Colonic mucosa (tissue), 4 donors: ENCODE measurements at regions of chr6 and their contacts with region 1.

Region 1: GRCh38 chr6:5379647-5380242 is 118.4 kb downstream of the FARS2 start:
- DNase-seq: peak; percentile 34
- H3K4me3 ChIP-seq: no peak overlapping the region
- H3K27ac ChIP-seq: no peak overlapping the region
- H3K4me1 ChIP-seq: no peaks in the 10 kb centered on the region
- H3K27me3 ChIP-seq: no peaks in the 10 kb centered on the region
- CTCF ChIP-seq: peak; percentile 73

Region 2: DNA sequence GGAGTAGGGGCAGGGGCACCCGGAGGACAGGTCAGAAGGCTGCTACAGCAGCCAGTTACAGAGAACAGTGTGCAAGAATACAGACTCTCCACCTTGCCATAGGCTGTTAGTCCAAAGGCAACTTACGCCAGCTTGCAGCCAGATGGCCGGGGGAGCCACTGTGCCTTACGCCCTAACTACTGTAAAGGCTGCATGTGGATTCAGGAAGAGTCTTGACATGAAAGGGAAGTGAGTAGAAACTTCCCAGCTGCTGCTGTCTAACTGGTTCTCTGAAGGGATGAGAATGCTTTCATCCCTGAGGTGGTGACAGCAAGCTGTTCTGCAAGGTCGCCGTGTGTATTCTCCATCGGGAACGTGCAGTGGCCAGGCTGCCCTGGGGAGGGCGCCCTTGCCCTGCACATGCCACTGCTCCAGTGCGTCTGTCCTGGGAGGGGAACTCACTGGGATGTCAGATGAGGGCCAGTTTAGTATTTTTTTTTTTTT is 165.1 kb before region 1 on chr6:
- intact Hi-C with region 1: loop called (anchors 5 kb)
- DNase-seq: peak; percentile 27
- H3K4me3 ChIP-seq: no peak overlapping the region
- H3K27ac ChIP-seq: no peak overlapping the region
- H3K4me1 ChIP-seq: no peaks in the 10 kb centered on the region
- H3K27me3 ChIP-seq: no peaks in the 10 kb centered on the region
- CTCF ChIP-seq: peak; percentile 54